Right ventricle myocardium inferior (tissue), 1 donor: ENCODE measurements at regions of chr14 and their contacts with region 1.

Region 1: DNA sequence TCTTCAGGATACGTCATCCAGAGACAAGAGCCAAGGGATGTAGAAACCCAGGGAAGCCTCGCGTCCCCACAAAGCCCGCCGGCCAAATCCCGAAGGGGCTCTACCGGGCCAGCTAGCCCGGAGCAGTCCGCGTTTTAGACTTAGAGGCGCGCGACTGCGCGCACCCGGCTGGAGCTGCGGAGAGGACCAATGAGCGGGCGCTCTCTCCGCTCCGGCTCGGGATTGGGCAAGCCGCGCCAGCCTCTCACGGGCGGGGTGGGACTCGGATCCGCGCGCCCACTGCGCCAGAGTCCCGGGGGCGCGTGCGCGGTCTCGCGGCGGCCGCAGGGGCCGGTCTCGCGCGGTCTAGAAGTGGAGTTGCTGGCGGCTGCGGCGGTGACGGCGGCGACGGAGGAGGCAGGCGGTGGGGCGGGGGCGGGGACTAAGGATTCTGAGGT is 239 bp upstream of the PALS1 start:
- DNase-seq: peak; percentile 98
- ATAC-seq: peak; percentile 98

Region 2: GRCh38 chr14:66507722-66508546 is 733.1 kb before region 1 on chr14 and contains the start of gene GPHN:
- intact Hi-C with region 1: loop called (anchors 10 kb)
- DNase-seq: peak; percentile 96
- ATAC-seq: peak; percentile 99
- total RNA-seq, gene GPHN: 23.5 TPM

Region 3: DNA sequence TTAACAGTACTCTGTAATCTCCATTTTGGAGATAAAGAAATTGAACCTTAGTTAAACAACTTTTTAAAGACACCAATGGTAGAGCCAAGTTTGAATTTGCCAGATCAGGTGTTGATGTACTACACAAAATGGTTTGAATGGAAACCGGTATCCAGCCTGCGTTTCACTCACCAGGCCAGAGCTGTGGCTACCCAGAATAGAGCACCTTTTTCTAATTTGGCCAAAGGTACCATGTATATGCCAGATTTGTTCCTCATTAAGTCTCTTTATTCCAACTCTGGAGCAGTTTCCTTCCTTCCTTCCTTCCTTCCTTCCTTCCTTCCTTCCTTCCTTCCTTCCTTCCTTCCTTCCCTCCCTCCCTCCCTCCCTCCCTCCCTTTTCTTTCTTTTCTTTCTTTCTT is 39.5 kb after region 1 on chr14:
- intact Hi-C with region 1: loop called (anchors 5 kb)
- DNase-seq: no peak
- ATAC-seq: no peak